ENCODE measurements at regions of chr19 and their contacts with region 1.

Region 1: GRCh38 chr19:6632002-6632621 is 37.8 kb downstream of the TNFSF14 start:
- DNase-seq: peak; percentile 80
- H3K4me3 Mint-ChIP-seq: no peak overlapping the region
- H3K27ac Mint-ChIP-seq: no peak overlapping the region
- H3K4me1 Mint-ChIP-seq: peaks cover 26% of the 10 kb centered on the region
- H3K27me3 Mint-ChIP-seq: peaks cover 4% of the 10 kb centered on the region

Region 2: DNA sequence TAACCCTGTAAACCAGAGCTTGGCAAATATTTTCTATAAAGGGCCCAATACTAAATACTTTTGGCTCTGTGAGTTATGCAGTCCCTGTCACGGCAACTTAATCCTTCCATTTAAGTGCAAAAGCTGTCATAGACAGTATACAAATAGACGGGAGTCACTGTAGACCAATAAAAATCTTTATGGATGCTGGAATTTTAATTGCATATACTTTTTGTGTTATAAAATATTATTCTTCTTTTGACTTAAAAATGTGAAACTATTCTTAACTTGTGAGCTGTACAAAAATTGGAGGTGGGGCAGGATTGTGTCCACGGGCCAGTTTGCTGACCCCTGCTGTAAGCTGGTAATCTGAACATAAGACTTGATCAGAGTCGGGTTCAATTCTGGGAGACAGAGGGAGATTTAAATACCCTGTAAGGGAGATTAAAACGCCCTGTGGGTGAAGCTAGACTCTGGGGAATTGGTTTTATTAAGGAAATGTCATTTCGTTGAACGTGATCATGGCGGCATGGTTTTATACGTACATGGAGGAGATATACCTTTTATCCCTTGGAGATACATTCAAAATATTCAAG is 16.1 kb after region 1 on chr19:
- CTCF ChIA-PET with region 1: interaction called, 10 read pairs
- POLR2A ChIA-PET with region 1: no interaction called
- intact Hi-C with region 1: no loop called
- DNase-seq: no peak
- H3K4me3 Mint-ChIP-seq: no peak overlapping the region
- H3K27ac Mint-ChIP-seq: no peak overlapping the region
- H3K4me1 Mint-ChIP-seq: peaks cover 22% of the 10 kb centered on the region
- H3K27me3 Mint-ChIP-seq: no peaks in the 10 kb centered on the region

Region 3: DNA sequence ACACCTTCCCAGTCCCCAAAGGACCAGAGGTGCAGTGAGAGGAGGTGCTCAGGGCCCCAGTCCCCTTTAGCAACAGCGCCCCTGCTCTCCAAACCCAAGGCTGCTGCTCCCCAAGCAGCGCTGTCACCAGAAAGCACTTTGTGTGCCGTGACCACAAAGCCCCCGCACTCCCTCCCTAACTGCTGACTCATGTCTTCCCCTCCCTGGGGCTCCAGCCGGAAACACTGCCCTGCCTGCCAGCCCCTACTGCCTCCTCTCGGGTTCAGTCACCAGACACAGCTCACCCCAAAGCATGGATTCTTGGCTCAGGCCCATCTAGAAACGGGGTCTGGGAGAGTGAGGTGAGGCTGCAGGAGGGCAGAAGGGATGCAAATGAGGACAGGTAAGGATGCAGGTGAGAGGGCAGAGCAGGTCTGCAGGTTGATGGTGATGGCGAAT is 42.8 kb after region 1 on chr19:
- CTCF ChIA-PET with region 1: interaction called, 8 read pairs
- POLR2A ChIA-PET with region 1: interaction called, 5 read pairs
- intact Hi-C with region 1: loop called (anchors 1 kb)
- DNase-seq: peak; percentile 98
- H3K4me3 Mint-ChIP-seq: peak overlapping the region; percentile 62
- H3K27ac Mint-ChIP-seq: peak overlapping the region; percentile 79
- H3K4me1 Mint-ChIP-seq: peaks cover 69% of the 10 kb centered on the region
- H3K27me3 Mint-ChIP-seq: peaks cover 3% of the 10 kb centered on the region

Region 4: GRCh38 chr19:6718741-6719539 is 86.8 kb after region 1 on chr19:
- CTCF ChIA-PET with region 1: no interaction called
- POLR2A ChIA-PET with region 1: no interaction called
- intact Hi-C with region 1: no loop called
- DNase-seq: peak; percentile 44
- H3K4me3 Mint-ChIP-seq: no peak overlapping the region
- H3K27ac Mint-ChIP-seq: no peak overlapping the region
- H3K4me1 Mint-ChIP-seq: peaks cover 6% of the 10 kb centered on the region
- H3K27me3 Mint-ChIP-seq: peaks cover 1% of the 10 kb centered on the region

Region 5: GRCh38 chr19:7004313-7004931 is 372.3 kb after region 1 on chr19:
- CTCF ChIA-PET with region 1: no interaction called
- POLR2A ChIA-PET with region 1: no interaction called
- intact Hi-C with region 1: no loop called
- DNase-seq: no peak
- H3K4me3 Mint-ChIP-seq: no peak overlapping the region
- H3K27ac Mint-ChIP-seq: no peak overlapping the region
- H3K4me1 Mint-ChIP-seq: peaks cover 27% of the 10 kb centered on the region
- H3K27me3 Mint-ChIP-seq: no peaks in the 10 kb centered on the region